Endothelial cell of umbilical vein (primary cell): ENCODE measurements at regions of chr1 and their contacts with region 1.

Region 1: DNA sequence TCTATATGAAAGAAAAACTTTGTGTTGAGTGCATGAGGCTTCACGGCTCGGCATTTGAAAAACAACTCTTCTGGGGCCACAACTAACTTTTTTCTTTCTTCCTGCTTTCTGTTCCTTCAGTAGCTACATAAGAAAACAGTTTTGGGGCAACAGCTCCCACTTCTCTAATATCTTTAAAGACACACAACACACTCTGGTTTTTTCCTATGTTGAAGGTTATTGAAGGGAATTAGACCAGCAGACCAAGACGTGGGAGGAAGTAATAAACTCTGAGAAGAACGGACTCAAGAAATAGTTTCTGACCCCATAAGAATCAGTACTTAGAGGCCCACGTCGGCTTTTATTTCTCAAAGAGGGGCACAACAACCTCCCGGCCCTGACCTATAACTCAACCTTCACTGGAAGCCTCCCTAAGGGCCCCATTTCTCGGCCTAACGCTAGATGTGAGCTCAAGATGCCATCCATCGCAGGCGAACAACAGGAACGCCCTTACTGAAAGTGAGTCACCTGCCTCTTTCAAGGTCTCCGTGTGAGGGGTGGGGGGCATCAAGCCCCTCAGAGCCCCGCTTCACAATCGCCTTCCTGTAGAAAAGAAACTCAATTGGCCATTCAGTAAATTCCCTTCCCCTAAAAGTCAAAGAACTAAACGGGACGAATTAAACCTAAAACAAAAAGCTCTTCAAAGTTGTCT is 844 bp downstream of the ZMYM6 start:
- DNase-seq: peak; percentile 73
- H3K4me3 ChIP-seq: peak overlapping the region; percentile 79 to 96 (median 85)
- H3K27ac ChIP-seq: peak overlapping the region; percentile 69
- H3K4me1 ChIP-seq: peaks cover 9% of the 10 kb centered on the region
- H3K27me3 ChIP-seq: no peaks in the 10 kb centered on the region
- CTCF ChIP-seq: no peak
- POLR2A ChIP-seq: no peak

Region 2: GRCh38 chr1:34984793-34985608 is 45.9 kb before region 1 on chr1 and contains the start of gene TMEM35B:
- CTCF ChIA-PET with region 1: interaction called, 5 read pairs
- POLR2A ChIA-PET with region 1: interaction called, 5 read pairs
- dilution Hi-C with region 1: no loop called
- intact Hi-C with region 1: loop called (anchors 1 kb)
- DNase-seq: peak; percentile 70
- H3K4me3 ChIP-seq: peak within 1 kb of the TSS; percentile 81 to 90 (median 89)
- H3K27ac ChIP-seq: peak within 1 kb of the TSS; percentile 82
- H3K4me1 ChIP-seq: peaks cover 15% of the 10 kb centered on the region
- H3K27me3 ChIP-seq: no peaks in the 10 kb centered on the region
- CTCF ChIP-seq: peak in 1 of 2 donors; percentile 8
- POLR2A ChIP-seq: peak; percentile 82
- total RNA-seq, gene TMEM35B: 18.7 and 19.1 TPM in 2 replicates

Region 3: GRCh38 chr1:35062518-35063196 is 31.8 kb after region 1 on chr1:
- CTCF ChIA-PET with region 1: no interaction called
- POLR2A ChIA-PET with region 1: interaction called, 4 read pairs
- dilution Hi-C with region 1: no loop called
- intact Hi-C with region 1: loop called (anchors 2 kb)
- DNase-seq: peak; percentile 87
- H3K4me3 ChIP-seq: no peak overlapping the region
- H3K27ac ChIP-seq: peak overlapping the region; percentile 57
- H3K4me1 ChIP-seq: peaks cover 18% of the 10 kb centered on the region
- H3K27me3 ChIP-seq: no peaks in the 10 kb centered on the region
- CTCF ChIP-seq: no peak
- POLR2A ChIP-seq: no peak

Region 4: GRCh38 chr1:35079003-35079930 is 48.4 kb after region 1 on chr1 and contains the start of gene ZMYM1:
- CTCF ChIA-PET with region 1: interaction called, 6 read pairs
- POLR2A ChIA-PET with region 1: interaction called, 10 read pairs
- dilution Hi-C with region 1: no loop called
- intact Hi-C with region 1: loop called (anchors 1 kb)
- DNase-seq: peak; percentile 95
- H3K4me3 ChIP-seq: peak within 1 kb of the TSS; percentile 41 to 78 (median 74)
- H3K27ac ChIP-seq: peak within 1 kb of the TSS; percentile 60
- H3K4me1 ChIP-seq: peaks cover 12% of the 10 kb centered on the region
- H3K27me3 ChIP-seq: no peaks in the 10 kb centered on the region
- CTCF ChIP-seq: no peak
- POLR2A ChIP-seq: peak; percentile 84
- total RNA-seq, gene ZMYM1: 20.7 and 21.4 TPM in 2 replicates

Region 5: DNA sequence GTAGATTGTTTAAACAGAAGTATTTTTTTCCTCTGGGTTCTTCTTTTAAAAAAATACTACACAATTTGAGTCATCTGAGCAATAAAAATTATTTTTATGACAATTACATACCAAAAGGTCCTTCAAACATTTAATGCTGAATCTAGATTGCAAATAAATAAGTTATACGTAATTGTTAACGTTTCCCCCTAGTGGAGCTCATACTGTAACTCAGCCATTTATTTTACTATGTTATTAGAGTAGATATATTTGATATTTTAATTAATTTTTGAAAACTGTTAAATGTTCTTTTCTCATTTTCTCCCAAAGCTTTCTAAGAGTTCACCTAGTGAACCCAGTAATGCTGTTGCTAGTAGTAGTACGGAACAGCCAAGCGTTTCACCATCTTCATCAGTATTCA is 81.8 kb after region 1 on chr1:
- CTCF ChIA-PET with region 1: interaction called, 5 read pairs
- POLR2A ChIA-PET with region 1: interaction called, 8 read pairs
- dilution Hi-C with region 1: no loop called
- intact Hi-C with region 1: loop called (anchors 2 kb)
- DNase-seq: peak; percentile 9
- H3K4me3 ChIP-seq: no peak overlapping the region
- H3K27ac ChIP-seq: no peak overlapping the region
- H3K4me1 ChIP-seq: peaks cover 9% of the 10 kb centered on the region
- H3K27me3 ChIP-seq: no peaks in the 10 kb centered on the region
- CTCF ChIP-seq: no peak
- POLR2A ChIP-seq: no peak

Region 6: DNA sequence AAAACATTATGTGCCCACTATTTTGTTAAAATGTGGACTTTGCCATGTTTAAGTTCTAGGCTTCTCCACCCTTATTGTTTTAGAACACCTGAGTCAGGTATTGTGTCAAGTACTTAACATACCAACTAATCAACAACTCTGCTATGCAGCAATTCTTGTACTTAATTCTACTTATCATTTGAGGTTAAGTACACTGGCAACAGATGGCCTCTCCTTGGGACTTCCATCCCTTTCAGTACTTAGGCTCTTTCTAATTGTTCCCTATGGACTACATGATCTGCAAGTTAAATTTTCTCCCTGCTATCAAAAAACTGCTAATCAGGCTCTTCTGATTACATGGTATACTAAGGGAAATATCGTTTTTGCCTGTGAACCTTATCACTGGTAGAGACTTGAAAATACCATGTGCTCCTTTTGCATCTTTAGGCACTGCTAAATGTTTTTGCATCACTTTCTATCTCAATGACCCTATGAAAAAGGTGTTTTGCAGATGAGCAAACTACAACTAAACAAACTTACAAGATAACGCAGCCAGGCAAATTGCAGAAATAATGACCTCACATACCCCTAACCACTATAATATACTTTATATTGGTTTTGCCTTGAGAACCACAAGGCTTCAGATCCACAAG is 143.1 kb after region 1 on chr1:
- CTCF ChIA-PET with region 1: no interaction called
- POLR2A ChIA-PET with region 1: no interaction called
- dilution Hi-C with region 1: no loop called
- intact Hi-C with region 1: loop called (anchors 2 kb)
- DNase-seq: no peak
- H3K4me3 ChIP-seq: no peak overlapping the region
- H3K27ac ChIP-seq: no peak overlapping the region
- H3K4me1 ChIP-seq: no peaks in the 10 kb centered on the region
- H3K27me3 ChIP-seq: no peaks in the 10 kb centered on the region
- CTCF ChIP-seq: no peak
- POLR2A ChIP-seq: no peak